ENCODE measurements at regions of chr1 and their contacts with region 1.

Region 1: GRCh38 chr1:223748773-223749733 is 36.7 kb downstream of the CAPN2 start:
- DNase-seq: peak; percentile 65
- ATAC-seq: peak; percentile 87
- H3K4me3 Mint-ChIP-seq: peak overlapping the region; percentile 56
- H3K27ac Mint-ChIP-seq: no peak overlapping the region
- H3K4me1 Mint-ChIP-seq: peaks cover 15% of the 10 kb centered on the region
- H3K27me3 Mint-ChIP-seq: no peaks in the 10 kb centered on the region

Region 2: GRCh38 chr1:223665552-223666312 is 83.3 kb before region 1 on chr1 and contains the start of gene CAPN8:
- CTCF ChIA-PET with region 1: no interaction called
- POLR2A ChIA-PET with region 1: no interaction called
- DNase-seq: no peak
- ATAC-seq: no peak
- H3K4me3 Mint-ChIP-seq: no peak within 1 kb of the TSS
- H3K27ac Mint-ChIP-seq: no peak within 1 kb of the TSS
- H3K4me1 Mint-ChIP-seq: no peaks in the 10 kb centered on the region
- H3K27me3 Mint-ChIP-seq: peaks cover 10% of the 10 kb centered on the region
- total RNA-seq, gene CAPN8: 0.08 TPM in 1 of 2 experiments, not detected in the other

Region 3: GRCh38 chr1:223700942-223701637 is 48.0 kb before region 1 on chr1:
- CTCF ChIA-PET with region 1: interaction called, 99 read pairs
- POLR2A ChIA-PET with region 1: interaction called, 3 read pairs
- DNase-seq: no peak
- ATAC-seq: no peak
- H3K4me3 Mint-ChIP-seq: no peak overlapping the region
- H3K27ac Mint-ChIP-seq: no peak overlapping the region
- H3K4me1 Mint-ChIP-seq: peaks cover 12% of the 10 kb centered on the region
- H3K27me3 Mint-ChIP-seq: peaks cover 3% of the 10 kb centered on the region

Region 4: DNA sequence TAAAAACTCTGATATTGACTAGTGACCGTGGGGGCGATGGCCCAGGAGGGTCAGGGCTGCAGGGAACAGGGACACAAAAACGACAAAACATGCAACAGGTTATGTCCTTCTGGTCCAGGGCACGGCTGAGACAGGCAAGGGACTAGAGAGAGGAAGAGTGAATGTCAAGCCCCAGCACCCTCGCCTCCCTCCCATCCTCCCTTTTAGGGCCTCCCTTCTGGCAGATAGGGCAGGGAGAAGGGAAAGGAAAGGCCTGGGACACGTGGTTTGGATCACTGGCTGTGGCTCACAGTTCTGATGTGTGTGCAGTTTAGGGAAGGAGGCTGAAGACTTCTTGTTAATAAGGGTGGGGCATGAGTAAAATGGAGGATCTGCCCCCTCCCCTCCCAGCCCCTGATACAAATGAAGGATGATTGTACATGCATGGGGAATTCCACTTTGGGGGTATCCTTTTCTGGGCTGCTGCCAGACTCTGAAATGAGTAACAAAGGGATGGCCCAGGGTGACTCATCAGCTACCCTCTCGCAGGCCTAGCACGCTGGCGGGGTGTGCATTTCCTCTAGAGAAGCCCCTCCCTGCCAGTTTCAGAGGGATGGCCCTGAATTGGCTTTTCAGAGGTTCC is 22.6 kb before region 1 on chr1:
- CTCF ChIA-PET with region 1: interaction called, 58 read pairs
- POLR2A ChIA-PET with region 1: interaction called, 4 read pairs
- DNase-seq: peak; percentile 90
- ATAC-seq: peak; percentile 100
- H3K4me3 Mint-ChIP-seq: peak overlapping the region; percentile 75
- H3K27ac Mint-ChIP-seq: peak overlapping the region; percentile 95
- H3K4me1 Mint-ChIP-seq: peaks cover 71% of the 10 kb centered on the region
- H3K27me3 Mint-ChIP-seq: no peaks in the 10 kb centered on the region

Region 5: DNA sequence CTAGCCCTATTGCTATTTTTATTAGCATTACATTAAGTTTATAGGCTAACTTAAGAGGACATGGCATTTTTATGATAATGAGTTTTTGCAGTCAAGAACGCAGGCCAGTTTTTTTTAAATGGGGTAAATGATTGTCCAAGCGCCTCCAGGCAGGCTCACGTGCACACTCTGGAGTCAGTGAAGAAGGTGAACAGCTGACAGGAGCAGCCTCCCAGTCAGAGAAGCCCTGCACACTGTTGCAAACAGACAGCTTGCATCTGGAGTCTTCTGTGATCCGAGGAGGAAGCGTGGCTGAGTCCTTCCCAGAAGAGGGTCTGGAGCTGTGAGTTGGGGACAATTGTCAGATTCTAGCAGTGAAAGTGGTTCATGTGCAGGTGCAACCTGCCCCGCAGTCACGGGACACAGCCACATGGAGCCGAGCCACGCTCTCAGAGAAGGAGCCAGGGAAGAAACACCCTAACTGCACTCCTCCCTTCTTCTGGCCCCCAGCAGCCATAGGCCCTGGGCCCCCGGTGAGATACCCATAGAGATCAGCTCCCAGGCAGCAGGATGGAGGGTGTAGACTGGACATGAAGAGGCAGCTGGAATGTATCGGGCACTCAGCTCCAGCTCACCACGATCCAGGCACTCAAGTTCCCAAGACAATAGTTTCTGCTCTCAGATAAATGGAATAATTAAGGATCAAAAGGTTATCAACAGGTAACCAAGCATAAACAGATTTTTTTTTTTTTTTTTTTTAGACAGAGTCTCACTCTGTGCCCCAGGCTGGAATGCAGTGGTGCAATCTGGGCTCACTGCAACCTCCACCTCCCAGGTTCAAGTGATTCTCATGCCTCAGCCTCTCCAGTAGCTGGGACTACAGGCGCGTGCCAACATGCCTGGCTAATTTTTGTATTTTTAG is 10.3 kb before region 1 on chr1:
- CTCF ChIA-PET with region 1: interaction called, 19 read pairs
- POLR2A ChIA-PET with region 1: no interaction called
- DNase-seq: no peak
- ATAC-seq: no peak
- H3K4me3 Mint-ChIP-seq: no peak overlapping the region
- H3K27ac Mint-ChIP-seq: no peak overlapping the region
- H3K4me1 Mint-ChIP-seq: peaks cover 9% of the 10 kb centered on the region
- H3K27me3 Mint-ChIP-seq: no peaks in the 10 kb centered on the region

Region 6: GRCh38 chr1:223780949-223781348 is 31.9 kb after region 1 on chr1:
- CTCF ChIA-PET with region 1: interaction called, 11 read pairs
- POLR2A ChIA-PET with region 1: interaction called, 3 read pairs
- DNase-seq: no peak
- ATAC-seq: peak; percentile 27
- H3K4me3 Mint-ChIP-seq: no peak overlapping the region
- H3K27ac Mint-ChIP-seq: peak overlapping the region; percentile 45
- H3K4me1 Mint-ChIP-seq: peaks cover 16% of the 10 kb centered on the region
- H3K27me3 Mint-ChIP-seq: no peaks in the 10 kb centered on the region